Vagina (tissue), 2 donors: ENCODE measurements at regions of chr6 and their contacts with region 1.

Region 1: DNA sequence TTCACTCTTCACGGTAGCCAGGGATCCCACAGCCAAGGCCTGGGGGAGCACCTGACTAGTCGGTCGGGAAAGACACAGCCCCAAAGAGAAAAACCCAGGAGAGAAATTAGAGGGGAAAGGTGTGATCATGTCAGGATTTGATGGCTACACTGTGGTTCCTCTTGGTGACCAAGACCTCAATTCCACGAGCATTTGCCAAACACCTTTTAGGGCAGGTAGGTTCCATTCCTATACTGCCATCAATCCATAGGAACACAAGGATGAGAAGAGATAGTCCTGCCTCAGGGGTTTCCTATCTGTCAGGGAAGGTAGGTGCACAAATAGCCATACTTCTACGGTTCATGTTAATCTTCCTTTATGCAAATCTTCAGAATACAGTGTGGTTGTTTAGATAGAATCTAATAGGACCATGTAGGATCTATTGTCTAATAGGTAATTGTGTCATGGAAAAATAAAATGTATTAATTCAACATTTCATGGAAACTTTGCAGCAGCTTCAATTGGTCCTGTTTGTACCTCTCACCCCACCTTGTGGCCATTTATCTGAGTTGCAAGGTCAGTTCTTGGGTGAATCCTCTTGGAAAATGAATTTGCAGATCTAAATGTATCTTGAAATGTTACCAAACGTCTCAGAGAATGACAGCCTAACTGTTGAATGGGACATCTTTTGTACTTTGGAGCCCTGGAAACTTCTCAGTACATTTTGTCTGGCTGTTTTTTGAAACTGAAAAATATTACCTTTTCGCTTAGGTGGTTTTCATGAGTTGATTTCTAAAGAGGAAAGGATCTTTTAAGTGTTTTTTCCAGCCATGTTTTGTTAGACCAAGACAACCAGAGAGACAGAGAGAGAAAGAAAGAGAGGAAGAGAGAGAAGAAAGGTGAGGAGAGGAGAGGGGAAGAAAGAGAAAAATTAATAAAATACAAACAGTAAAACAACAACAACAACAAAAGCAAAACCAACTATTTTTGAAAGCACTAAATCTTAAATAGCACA is 33.7 kb upstream of the IYD start:
- DNase-seq: no peak
- H3K4me3 ChIP-seq: no peak overlapping the region
- H3K27ac ChIP-seq: no peak overlapping the region
- H3K4me1 ChIP-seq: no peaks in the 10 kb centered on the region
- H3K27me3 ChIP-seq: no peaks in the 10 kb centered on the region
- CTCF ChIP-seq: peak; percentile 55 to 72 (median 58)
- POLR2A ChIP-seq: no peak

Region 2: GRCh38 chr6:150072201-150072600 is 262.9 kb before region 1 on chr6:
- intact Hi-C with region 1: loop called (anchors 10 kb)
- DNase-seq: no peak
- H3K4me3 ChIP-seq: no peak overlapping the region
- H3K27ac ChIP-seq: no peak overlapping the region
- H3K4me1 ChIP-seq: peaks cover 9% of the 10 kb centered on the region
- H3K27me3 ChIP-seq: no peaks in the 10 kb centered on the region
- CTCF ChIP-seq: no peak
- POLR2A ChIP-seq: no peak